Left ventricle myocardium inferior (tissue), 1 donor: ENCODE measurements at regions of chr5 and their contacts with region 1.

Region 1: GRCh38 chr5:173293817-173294672 is 34.2 kb downstream of the STC2 start:
- DNase-seq: peak; percentile 75
- H3K4me3 ChIP-seq: peak overlapping the region; percentile 42
- H3K27ac ChIP-seq: no peak overlapping the region
- H3K4me1 ChIP-seq: peaks cover 22% of the 10 kb centered on the region
- H3K27me3 ChIP-seq: peaks cover 24% of the 10 kb centered on the region
- CTCF ChIP-seq: peak; percentile 90

Region 2: GRCh38 chr5:173331956-173332479 is 38.0 kb after region 1 on chr5:
- intact Hi-C with region 1: loop called (anchors 2 kb)
- DNase-seq: peak; percentile 87
- H3K4me3 ChIP-seq: no peak overlapping the region
- H3K27ac ChIP-seq: no peak overlapping the region
- H3K4me1 ChIP-seq: peaks cover 39% of the 10 kb centered on the region
- H3K27me3 ChIP-seq: peaks cover 31% of the 10 kb centered on the region
- CTCF ChIP-seq: peak; percentile 97

Region 3: GRCh38 chr5:173342813-173343755 is 49.0 kb after region 1 on chr5:
- intact Hi-C with region 1: no loop called
- DNase-seq: no peak
- H3K4me3 ChIP-seq: no peak overlapping the region
- H3K27ac ChIP-seq: no peak overlapping the region
- H3K4me1 ChIP-seq: no peaks in the 10 kb centered on the region
- H3K27me3 ChIP-seq: no peaks in the 10 kb centered on the region
- CTCF ChIP-seq: no peak

Region 4: DNA sequence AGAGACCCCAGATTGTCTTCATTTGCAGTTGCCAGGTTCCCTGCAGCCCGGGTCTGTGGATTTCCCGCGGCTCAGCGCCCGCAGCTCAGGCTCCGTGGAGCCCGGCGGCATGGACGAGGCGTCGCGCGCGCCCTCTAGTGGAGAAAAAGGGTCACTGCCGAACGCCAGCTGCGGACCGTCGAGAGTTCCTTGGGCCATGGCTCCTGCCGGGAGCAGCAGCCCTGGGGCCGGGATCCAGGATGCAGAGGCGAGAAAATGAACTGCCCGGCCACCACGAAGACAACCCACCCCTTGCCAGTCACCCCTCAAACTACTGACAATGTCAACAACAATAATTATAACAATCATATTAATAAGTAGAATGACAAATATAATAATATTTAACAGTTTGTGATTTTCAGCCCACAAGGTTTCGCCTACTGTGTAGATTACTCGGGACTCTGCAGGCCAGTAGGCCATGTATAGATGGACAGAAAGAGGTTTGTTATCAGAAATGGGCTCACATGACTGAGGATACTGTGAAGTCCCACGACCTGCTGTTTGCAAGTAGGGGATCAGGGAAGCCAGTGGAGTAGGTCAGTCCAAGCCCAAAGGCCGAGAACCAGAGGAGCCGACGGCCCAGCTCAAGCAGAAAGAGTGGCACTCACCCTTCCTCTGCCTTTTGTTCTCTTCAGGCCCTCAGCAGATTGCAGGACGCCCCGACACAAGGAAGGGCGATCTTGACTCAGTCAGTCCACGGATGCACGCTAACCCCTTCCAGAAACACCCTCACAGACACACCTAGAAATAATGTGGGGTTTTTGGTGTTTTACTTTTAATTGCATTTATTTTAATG is 279.3 kb after region 1 on chr5:
- intact Hi-C with region 1: loop called (anchors 5 kb)
- DNase-seq: peak; percentile 80
- H3K4me3 ChIP-seq: peak overlapping the region; percentile 31
- H3K27ac ChIP-seq: no peak overlapping the region
- H3K4me1 ChIP-seq: peaks cover 13% of the 10 kb centered on the region
- H3K27me3 ChIP-seq: no peaks in the 10 kb centered on the region
- CTCF ChIP-seq: peak; percentile 98